SK-N-SH (cell line): ENCODE measurements at regions of chr12 and their contacts with region 1.

Region 1: DNA sequence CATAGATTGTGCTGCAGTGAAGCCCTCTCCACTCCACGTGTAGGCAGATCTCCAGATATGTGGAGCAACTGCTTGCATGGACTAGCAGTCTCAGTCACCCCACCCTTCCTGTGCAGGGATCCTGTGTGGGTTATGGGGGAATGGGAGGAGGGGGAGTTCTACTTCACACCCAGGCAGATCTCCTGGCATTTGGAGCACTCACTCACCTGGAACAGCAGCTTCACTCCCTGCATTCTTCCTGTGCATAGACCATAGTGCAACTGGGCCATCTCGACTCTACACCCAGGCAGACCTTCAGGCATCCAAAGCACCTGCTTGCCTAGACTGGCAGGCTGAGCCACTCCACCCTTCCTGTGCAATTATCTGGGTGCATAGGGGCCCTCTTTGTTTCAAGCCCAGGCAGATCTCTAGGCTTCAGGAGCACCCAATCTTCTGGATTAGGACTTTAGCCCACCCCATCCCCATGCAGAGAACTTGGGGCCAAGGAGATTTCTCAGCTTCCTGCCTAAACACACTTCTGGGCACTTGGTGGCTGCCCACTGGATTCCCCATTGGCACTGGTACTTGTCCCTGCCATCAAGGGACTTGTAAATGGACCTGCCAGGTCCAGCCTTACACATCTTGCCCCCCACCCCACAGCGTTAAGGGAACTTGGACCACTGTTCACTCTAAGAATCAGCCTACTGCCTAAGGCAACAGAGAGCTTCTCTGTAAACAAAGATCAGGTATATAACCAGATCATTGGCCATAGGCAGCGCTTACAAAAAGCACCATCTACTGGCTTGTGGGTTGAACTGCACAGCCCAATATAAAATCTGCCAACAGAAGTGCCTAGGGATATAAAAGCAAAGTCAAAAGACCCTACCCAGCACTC is 95.8 kb upstream of the PCED1B start:
- DNase-seq: peak; percentile 27
- H3K4me3 ChIP-seq: peak overlapping the region; percentile 24 to 41; a peak in 3 of 4 replicates
- H3K27ac ChIP-seq: peak overlapping the region; percentile 63 to 85
- H3K4me1 ChIP-seq: peaks cover 0 to 13% of the 10 kb centered on the region in 2 experiments
- H3K27me3 ChIP-seq: no peaks in the 10 kb centered on the region
- CTCF ChIP-seq: peak; percentile 89
- EP300 ChIP-seq: no peak
- RAD21 ChIP-seq: peak; percentile 73

Region 2: GRCh38 chr12:47021298-47021697 is 37.7 kb after region 1 on chr12:
- CTCF ChIA-PET with region 1: interaction called, 14 read pairs
- POLR2A ChIA-PET with region 1: no interaction called
- DNase-seq: peak; percentile 17
- H3K4me3 ChIP-seq: no peak overlapping the region
- H3K27ac ChIP-seq: peak overlapping the region; percentile 76 to 89
- H3K4me1 ChIP-seq: peaks cover 0 to 18% of the 10 kb centered on the region in 2 experiments
- H3K27me3 ChIP-seq: no peaks in the 10 kb centered on the region
- CTCF ChIP-seq: peak; percentile 77
- EP300 ChIP-seq: peak in 1 of 2 experiments; percentile 29; a peak in 1 of 4 replicates
- RAD21 ChIP-seq: peak; percentile 75